PC-3 (cell line): ENCODE measurements at regions of chr12 and their contacts with region 1.

Region 1: DNA sequence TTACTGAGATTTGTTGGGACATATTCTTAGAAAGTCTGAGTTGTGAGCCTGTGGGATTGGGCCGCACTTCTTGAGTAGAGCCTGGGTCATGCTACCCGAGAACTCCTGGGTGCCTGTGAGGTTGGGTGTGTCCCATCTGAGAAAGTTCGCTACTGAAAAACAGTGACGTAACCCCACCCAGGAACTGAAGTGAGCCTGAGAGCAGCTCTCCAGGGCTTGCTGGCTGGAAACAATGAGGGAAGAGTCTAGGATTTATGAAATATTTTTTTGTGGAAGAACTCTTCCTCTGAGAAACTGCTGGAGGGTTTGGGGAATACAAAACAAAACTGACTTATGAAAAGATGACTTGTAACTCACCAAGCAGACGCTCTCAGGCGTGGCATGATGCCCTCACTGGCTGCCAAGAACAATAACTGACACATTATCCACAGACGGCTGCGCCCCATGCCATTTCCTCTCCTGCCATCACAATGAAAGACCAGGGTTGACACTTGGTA is 69.2 kb downstream of the RASSF3 start:
- DNase-seq: peak; percentile 90
- ATAC-seq: peak; percentile 82
- H3K4me3 ChIP-seq: peak overlapping the region; percentile 65
- H3K27ac ChIP-seq: peak overlapping the region; percentile 93
- H3K4me1 ChIP-seq: peaks cover 44% of the 10 kb centered on the region
- H3K27me3 ChIP-seq: no peaks in the 10 kb centered on the region
- CTCF ChIP-seq: no peak

Region 2: GRCh38 chr12:64318605-64319004 is 360.9 kb before region 1 on chr12:
- CTCF ChIA-PET with region 1: no interaction called
- POLR2A ChIA-PET with region 1: no interaction called
- intact Hi-C with region 1: no loop called
- DNase-seq: no peak
- ATAC-seq: no peak
- H3K4me3 ChIP-seq: no peak overlapping the region
- H3K27ac ChIP-seq: no peak overlapping the region
- H3K4me1 ChIP-seq: no peaks in the 10 kb centered on the region
- H3K27me3 ChIP-seq: no peaks in the 10 kb centered on the region
- CTCF ChIP-seq: 0 out of 2 replicates have a peak, but pooled peaks have one; percentile 13

Region 3: DNA sequence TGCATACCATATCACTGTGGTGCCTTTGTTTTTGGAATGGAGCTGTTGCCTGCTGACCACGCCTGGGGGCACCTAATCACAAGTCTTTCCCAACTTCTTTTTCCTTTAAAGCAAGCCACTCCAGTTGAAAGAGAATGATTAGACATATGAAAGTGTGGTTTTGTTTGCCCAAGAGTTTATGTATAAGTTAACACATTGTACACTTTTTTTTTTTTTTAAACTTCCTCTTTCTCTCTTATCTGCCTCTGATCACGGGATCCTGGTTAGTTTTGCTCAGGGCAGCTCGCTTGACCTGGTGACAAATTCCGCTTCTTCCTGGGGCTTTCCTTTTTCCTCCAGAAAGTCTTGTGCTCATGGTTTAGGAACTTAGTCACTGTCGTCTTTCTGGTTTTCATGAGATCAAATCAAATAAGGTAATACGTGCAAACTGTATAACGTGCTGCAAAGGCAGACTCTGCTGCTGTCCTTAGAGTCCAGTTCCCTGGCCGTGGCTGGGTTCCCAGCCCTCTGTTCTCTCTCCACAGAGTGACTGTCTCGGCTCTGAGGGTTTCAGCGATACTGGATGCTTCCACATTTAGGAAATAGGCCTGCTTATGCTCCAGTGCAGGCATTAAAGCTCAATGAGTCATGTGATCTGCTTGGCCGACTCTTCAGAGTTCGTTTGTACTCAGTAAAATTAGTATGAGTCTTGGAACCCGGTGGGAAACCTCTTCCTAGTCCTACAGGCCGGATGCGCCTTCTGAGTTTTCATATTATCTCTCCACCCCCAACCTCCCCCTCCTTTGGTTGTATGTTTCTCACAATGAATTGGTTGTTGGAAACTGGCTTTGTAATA is 54.1 kb before region 1 on chr12:
- CTCF ChIA-PET with region 1: no interaction called
- POLR2A ChIA-PET with region 1: no interaction called
- intact Hi-C with region 1: loop called (anchors 2 kb)
- DNase-seq: peak; percentile 94
- ATAC-seq: peak; percentile 77
- H3K4me3 ChIP-seq: peak overlapping the region; percentile 50
- H3K27ac ChIP-seq: peak overlapping the region; percentile 97
- H3K4me1 ChIP-seq: peaks cover 48% of the 10 kb centered on the region
- H3K27me3 ChIP-seq: no peaks in the 10 kb centered on the region
- CTCF ChIP-seq: peak; percentile 14; the same call in 1 of the 2 replicates

Region 4: DNA sequence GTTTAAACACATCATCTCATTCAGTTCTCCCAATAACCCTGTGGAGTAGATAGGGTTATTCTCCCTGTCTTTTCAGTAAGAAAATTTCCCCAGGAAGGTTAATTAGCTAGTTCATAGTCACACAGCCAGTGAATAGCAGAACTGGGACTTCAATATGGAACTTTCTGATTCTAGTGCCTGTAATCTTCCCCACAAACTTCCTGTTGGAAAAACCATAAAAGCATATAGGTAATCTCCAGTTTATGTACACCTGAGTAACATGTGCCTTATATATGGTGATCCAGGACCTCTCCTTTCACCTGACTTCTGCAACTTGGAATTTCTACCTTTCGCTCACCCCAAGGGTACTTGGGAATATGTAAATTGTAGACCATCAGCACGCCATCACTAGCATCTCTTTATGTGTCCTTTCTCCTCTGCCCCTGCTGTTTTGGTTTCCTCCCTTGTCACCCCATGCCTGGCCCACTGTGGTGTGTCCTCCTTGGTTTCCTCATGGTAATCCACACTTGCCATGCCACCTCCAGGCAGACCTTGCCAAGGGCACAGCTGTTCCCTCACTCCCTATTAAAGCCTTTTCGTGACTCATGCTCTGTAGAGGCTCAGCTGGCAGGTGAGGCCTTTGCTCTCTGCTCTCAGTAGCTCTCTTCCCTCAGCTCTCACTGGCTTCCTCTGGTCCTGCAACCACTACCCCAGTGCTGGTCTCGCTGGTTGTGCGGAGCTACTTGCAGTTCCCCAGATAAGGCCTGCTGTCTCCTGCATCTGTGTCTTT is 161.6 kb after region 1 on chr12:
- CTCF ChIA-PET with region 1: no interaction called
- POLR2A ChIA-PET with region 1: no interaction called
- intact Hi-C with region 1: no loop called
- DNase-seq: peak; percentile 19
- ATAC-seq: peak; percentile 37; the same call in 1 of the 2 replicates
- H3K4me3 ChIP-seq: no peak overlapping the region
- H3K27ac ChIP-seq: no peak overlapping the region
- H3K4me1 ChIP-seq: no peaks in the 10 kb centered on the region; the same call in 1 of the 2 replicates
- H3K27me3 ChIP-seq: no peaks in the 10 kb centered on the region
- CTCF ChIP-seq: no peak